Endothelial cell of umbilical vein (primary cell): ENCODE measurements at regions of chr10 and their contacts with region 1.

Region 1: DNA sequence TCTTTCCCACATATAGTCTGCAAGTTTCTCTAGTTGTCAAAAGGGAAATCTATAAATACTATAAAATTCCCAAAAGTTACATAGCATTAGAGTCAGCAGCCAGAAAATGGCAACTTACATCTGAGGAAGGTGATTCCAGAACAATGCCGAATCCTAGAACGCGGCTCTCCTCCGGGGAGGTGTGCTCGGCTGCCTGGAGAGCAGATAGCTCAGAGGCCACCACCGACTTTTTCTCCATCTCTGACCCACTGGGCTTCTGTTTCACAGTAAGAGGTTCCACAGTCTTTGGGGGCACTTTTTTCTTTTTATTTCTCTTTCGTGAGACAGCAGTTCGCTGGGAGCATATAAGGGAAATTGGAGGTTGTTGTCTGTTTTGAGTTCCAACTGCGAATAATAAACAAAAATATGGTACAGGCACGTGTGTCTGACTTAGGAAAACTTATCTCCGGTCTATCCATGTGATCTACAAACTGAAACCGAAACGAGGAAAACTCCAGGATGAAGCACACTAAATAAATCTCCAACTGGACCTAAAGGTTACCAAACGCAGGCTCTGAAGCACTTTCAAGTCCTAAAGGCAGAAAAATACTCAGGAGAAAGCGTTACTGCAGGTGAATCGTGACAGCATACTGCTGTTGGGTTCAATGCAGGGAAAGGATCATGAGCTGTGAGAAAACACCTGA is 36.2 kb downstream of the BEND7 start:
- DNase-seq: no peak
- H3K4me3 ChIP-seq: no peak overlapping the region
- H3K27ac ChIP-seq: no peak overlapping the region
- H3K4me1 ChIP-seq: no peaks in the 10 kb centered on the region
- H3K27me3 ChIP-seq: no peaks in the 10 kb centered on the region
- CTCF ChIP-seq: no peak
- POLR2A ChIP-seq: no peak

Region 2: GRCh38 chr10:14340051-14340744 is 847.6 kb after region 1 on chr10:
- CTCF ChIA-PET with region 1: no interaction called
- POLR2A ChIA-PET with region 1: interaction called, 10 read pairs
- dilution Hi-C with region 1: no loop called
- intact Hi-C with region 1: no loop called
- DNase-seq: no peak
- H3K4me3 ChIP-seq: no peak overlapping the region
- H3K27ac ChIP-seq: no peak overlapping the region
- H3K4me1 ChIP-seq: no peaks in the 10 kb centered on the region
- H3K27me3 ChIP-seq: peaks cover 10 to 31% of the 10 kb centered on the region in 2 experiments
- CTCF ChIP-seq: no peak
- POLR2A ChIP-seq: no peak